Dorsolateral prefrontal cortex (tissue), 120 donors: ENCODE measurements at regions of chr14 and their contacts with region 1.

Region 1: GRCh38 chr14:80954687-80955299 is 628 bp upstream of the TSHR start:
- DNase-seq: peak; percentile 53 to 85 (median 71)
- H3K4me3 ChIP-seq: peak overlapping the region; percentile 31 to 90 (median 64)
- H3K27ac ChIP-seq: no peak overlapping the region
- H3K27me3 ChIP-seq: no peaks in the 10 kb centered on the region
- CTCF ChIP-seq: peak; percentile 47 to 94 (median 86)

Region 2: GRCh38 chr14:80987235-80988032 is 32.6 kb after region 1 on chr14:
- intact Hi-C with region 1: loop called (anchors 2 kb)
- DNase-seq: peak in 8 of 10 donors; percentile 46 to 79 (median 59)
- H3K4me3 ChIP-seq: no peak overlapping the region
- H3K27ac ChIP-seq: no peak overlapping the region
- H3K27me3 ChIP-seq: peaks cover 0 to 17% (median 0%) of the 10 kb centered on the region in 45 donors
- CTCF ChIP-seq: peak; percentile 58 to 98 (median 93)

Region 3: GRCh38 chr14:81211844-81212243 is 257.1 kb after region 1 on chr14:
- intact Hi-C with region 1: loop called in 1 of 2 experiments (anchors 2 kb)
- DNase-seq: peak in 4 of 10 donors; percentile 41 to 68 (median 52)
- H3K4me3 ChIP-seq: no peak overlapping the region
- H3K27ac ChIP-seq: peak overlapping the region in 5 of 59 donors; percentile 5 to 44 (median 18)
- H3K27me3 ChIP-seq: no peaks in the 10 kb centered on the region
- CTCF ChIP-seq: peak in 54 of 56 donors; percentile 26 to 76 (median 56)

Region 4: DNA sequence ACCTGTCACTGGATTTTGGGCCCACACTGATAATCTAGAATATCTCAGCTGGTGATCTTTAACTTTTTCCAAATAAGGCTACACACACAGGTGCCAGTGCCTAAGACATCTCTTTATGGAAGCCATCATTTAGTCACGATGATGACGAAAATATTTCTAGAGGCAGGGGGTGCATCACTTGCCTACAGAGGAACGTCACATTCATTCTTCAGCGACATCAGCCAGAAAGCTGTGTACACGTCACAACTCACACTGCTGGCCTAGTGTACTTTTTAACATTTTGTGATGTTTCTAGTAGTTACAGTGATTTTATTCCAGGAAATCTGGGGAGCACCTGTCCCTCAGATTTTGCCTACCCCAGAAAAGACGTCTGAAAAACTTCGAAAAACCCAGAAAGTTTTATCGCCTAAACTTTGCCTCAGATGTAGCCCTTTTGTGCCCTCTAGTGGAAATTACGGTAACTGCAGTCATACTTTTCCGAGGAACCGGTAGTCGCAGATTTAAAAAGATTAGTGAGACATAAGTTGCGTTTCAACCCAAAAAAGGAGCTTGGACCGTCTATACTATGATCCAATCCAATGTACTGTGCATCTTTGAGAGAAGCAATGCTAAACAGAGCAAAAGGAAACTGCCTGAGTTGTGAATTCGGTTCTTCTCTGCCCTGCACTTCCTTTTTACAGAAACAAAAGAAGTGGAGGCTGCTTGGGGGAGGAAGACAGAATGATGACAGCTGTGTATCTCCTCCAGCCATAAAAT is 509.6 kb after region 1 on chr14:
- intact Hi-C with region 1: loop called in 1 of 2 experiments (anchors 10 kb)
- DNase-seq: peak in 1 of 10 donors; percentile 42
- H3K4me3 ChIP-seq: peak overlapping the region in 57 of 59 donors; percentile 12 to 67 (median 50)
- H3K27ac ChIP-seq: peak overlapping the region in 10 of 59 donors; percentile 15 to 63 (median 37)
- H3K27me3 ChIP-seq: no peaks in the 10 kb centered on the region
- CTCF ChIP-seq: peak; percentile 76 to 98 (median 91)